ENCODE measurements at regions of chr15 and their contacts with region 1.

Region 1: DNA sequence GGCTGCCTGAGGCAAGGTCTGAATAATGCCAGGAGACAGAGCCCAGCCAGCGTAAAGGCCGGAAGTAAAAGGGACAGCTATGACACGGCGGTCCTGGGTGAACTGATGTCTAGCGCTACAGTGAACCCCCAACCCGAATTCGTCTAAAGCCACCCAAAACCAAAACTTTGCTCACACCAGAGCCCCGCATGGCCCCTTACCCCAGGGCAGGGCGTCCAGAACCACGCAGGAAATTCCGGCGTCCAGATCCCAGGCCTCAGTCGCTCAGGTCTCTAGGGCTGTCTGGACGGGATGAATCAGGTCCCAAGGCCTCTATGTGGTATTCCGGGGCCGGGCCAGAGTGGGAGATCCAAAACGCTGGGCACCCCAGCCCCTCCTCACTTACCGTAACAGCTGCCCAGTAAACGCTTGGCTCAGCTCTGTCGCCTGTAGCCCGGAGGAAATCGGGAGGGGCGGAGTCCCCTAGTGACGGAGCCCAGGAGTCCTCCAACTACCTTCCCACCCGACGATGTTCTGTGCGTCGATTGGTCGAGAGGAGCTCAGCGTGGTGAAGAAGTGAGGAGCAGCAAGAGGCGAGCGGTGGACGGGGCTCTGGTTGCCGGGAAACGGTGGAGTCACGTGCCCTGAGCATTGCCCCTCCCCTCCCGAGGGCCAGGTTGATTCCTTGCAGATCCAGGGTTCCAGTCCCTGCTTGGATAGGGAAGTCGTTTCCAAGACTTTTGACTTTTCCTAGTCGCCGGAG is at the start of gene CCDC32:
- DNase-seq: peak; percentile 98 to 99
- ATAC-seq: peak; percentile 98
- H3K4me3 ChIP-seq: peak within 1 kb of the TSS; percentile 32 to 45
- H3K27ac ChIP-seq: peak within 1 kb of the TSS; percentile 25 to 70
- H3K4me1 ChIP-seq: peaks cover 0 to 5% of the 10 kb centered on the region in 2 donors
- H3K27me3 ChIP-seq: no peaks in the 10 kb centered on the region
- total RNA-seq, gene CCDC32: 32.0 to 34.0 TPM

Region 2: GRCh38 chr15:40633143-40633542 is 68.4 kb after region 1 on chr15:
- intact Hi-C with region 1: no loop called
- DNase-seq: no peak
- ATAC-seq: no peak
- H3K4me3 ChIP-seq: no peak overlapping the region
- H3K27ac ChIP-seq: no peak overlapping the region
- H3K4me1 ChIP-seq: no peaks in the 10 kb centered on the region
- H3K27me3 ChIP-seq: no peaks in the 10 kb centered on the region

Region 3: DNA sequence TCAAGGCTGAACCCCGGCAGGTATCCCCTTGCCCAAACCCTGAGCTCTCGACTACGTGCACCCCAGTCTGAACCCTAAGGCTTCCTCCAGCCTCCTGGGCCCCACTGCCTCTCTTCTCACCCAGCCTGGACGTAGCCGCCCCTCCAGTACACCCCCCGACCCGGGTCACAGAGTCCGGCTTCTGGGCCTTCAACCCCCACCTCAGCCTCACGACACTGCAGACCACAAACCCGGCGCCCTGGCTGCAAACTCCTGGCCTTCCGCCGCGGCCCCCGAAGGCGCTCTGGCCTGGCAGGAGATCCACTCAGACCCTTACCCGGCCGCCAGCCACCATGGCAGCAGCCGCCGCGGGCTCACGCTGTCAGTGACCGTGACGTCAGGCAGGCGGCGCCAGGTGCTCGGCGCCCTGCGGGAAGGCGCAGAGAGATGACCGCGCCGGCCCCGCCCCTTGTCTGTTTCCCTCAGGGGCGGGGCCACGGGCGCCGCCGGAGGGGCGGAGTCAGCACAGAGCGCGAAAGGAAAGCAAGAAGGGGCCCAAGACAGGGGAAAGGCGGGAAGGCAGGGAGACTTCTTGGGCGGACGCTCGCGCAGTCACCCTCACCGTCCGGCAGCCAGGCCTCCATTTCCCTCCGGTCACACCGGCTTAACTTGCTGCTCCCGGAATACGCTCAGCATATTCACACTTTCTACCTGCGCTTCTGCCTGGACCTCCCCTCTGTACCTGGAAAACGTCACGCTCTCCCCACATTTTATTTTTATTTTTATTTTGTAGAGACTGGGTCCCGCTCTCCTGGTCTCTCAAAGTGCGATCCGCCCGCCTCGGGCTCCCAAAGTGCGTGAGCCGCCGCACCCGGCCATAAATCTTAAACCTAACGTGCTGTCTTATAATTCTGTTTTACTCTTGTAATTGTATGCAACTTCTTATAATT is 190.4 kb after region 1 on chr15 and contains the start of gene RMDN3:
- intact Hi-C with region 1: loop called in 1 of 2 experiments (anchors 10 kb)
- DNase-seq: peak; percentile 96 to 98
- ATAC-seq: peak; percentile 98
- H3K4me3 ChIP-seq: peak within 1 kb of the TSS; percentile 78 to 80
- H3K27ac ChIP-seq: peak within 1 kb of the TSS in 1 of 2 donors; percentile 79
- H3K4me1 ChIP-seq: no peaks in the 10 kb centered on the region
- H3K27me3 ChIP-seq: no peaks in the 10 kb centered on the region
- total RNA-seq, gene RMDN3: 21.1 to 29.1 TPM

Measured in aorta (tissue), 5 donors.